ENCODE measurements at regions of chr12 and their contacts with region 1.

Region 1: DNA sequence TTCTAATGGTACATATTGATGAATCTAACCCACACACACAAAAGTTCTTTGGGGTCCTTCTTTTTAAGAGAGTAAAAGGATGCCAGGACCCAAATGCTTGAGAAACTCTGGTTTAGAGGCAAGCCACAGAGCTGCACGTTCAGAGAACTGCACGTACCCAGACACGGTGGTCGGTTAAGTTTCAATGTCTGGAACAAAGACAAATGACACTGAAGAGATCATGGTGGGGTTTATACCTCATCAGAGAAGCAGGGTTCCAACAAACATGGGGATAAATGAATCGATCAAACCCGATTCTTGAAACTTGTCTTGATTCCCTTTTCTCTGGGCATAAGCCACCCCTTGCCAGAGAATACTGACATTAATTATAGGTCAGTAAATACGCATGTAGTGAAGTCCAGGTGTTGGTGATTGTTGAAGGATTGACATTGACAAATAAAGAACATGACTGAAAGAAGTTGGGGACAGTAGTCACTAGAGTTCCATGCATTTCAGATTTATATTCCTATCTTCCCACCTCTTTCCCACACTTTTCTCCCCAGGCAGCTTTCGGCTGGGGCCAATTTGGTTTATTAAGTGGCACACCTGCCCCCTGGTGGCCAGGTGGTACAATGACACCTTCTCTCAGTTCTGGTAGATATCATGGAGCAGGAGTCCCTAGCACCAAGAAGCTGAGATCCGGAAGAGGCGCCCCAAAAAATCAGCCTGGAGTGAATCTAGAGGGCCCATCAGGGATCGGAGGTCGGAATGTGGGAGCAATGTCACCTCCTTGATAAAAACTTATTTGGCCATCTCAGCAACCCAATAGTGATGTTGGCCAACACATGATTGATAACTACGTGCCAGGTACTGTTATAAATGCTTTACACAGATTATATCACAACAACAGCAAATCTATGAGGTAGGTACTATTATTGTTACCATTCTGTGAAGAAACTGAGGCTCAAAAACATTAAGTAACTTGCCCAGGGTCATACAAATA is 17.8 kb upstream of the HDAC7 start:
- DNase-seq: peak; percentile 52 to 80 (median 65)
- ATAC-seq: peak; percentile 68
- H3K4me3 ChIP-seq: no peak overlapping the region
- H3K4me3 Mint-ChIP-seq: no peak overlapping the region
- H3K27ac ChIP-seq: no peak overlapping the region
- H3K27ac Mint-ChIP-seq: peak overlapping the region in 8 of 9 donors; percentile 35 to 97 (median 76)
- H3K4me1 ChIP-seq: peaks cover 19 to 52% of the 10 kb centered on the region in 2 donors
- H3K4me1 Mint-ChIP-seq: peaks cover 38 to 71% (median 55%) of the 10 kb centered on the region in 7 donors
- H3K27me3 ChIP-seq: no peaks in the 10 kb centered on the region
- H3K27me3 Mint-ChIP-seq: no peaks in the 10 kb centered on the region

Region 2: DNA sequence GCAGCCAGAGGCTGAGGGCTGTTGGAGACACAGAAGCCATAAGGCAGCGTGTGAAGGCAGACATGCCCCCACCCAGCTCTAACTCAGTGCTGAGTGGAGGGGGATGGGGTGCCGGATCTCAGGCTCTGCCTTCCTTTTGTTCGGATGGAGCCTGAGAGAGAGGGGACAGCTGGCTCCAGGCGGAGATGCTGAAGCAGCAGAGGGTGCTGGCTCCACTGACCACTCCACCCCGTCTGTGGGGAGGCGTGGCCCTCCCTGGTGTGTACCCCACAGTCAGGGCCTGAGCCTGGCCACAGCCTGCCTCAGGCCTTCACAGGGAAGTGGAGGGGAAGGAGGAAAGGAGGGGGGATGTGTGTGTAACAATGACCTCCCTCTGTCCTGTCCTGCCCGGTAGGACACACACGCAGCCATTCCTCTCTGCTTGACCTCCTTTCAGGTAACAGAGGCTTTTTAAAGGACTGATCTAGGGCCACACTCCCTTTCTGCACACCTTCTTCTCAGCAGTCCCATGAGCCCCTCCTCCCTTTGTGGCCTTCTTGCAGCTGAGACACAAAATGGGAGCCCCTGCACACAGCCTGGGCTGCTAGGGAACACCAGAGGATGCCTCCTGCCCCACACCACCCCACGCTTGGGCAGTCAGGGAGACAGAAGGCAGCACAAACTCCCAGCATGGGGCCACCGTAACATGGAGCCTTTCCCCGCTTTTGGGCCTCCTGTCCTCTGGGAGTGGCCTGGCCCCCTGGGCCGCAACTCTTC is 102.6 kb before region 1 on chr12:
- CTCF ChIA-PET with region 1: interaction called, 330 read pairs
- POLR2A ChIA-PET with region 1: interaction called, 4 read pairs
- intact Hi-C with region 1: no loop called
- DNase-seq: no peak
- ATAC-seq: no peak
- H3K4me3 ChIP-seq: no peak overlapping the region
- H3K4me3 Mint-ChIP-seq: no peak overlapping the region
- H3K27ac ChIP-seq: no peak overlapping the region
- H3K27ac Mint-ChIP-seq: no peak overlapping the region
- H3K4me1 ChIP-seq: no peaks in the 10 kb centered on the region
- H3K4me1 Mint-ChIP-seq: peaks cover 0 to 14% (median 5%) of the 10 kb centered on the region in 7 donors
- H3K27me3 ChIP-seq: no peaks in the 10 kb centered on the region
- H3K27me3 Mint-ChIP-seq: no peaks in the 10 kb centered on the region

Region 3: GRCh38 chr12:47773062-47773857 is 64.2 kb before region 1 on chr12 and contains the start of gene SLC48A1:
- CTCF ChIA-PET with region 1: interaction called, 167 read pairs
- POLR2A ChIA-PET with region 1: interaction called, 19 read pairs
- intact Hi-C with region 1: loop called in 1 of 2 experiments (anchors 1 kb)
- DNase-seq: peak; percentile 63 to 84 (median 80)
- ATAC-seq: peak; percentile 96
- H3K4me3 ChIP-seq: peak within 1 kb of the TSS; percentile 59
- H3K4me3 Mint-ChIP-seq: peak within 1 kb of the TSS in 9 of 10 donors; percentile 83 to 94 (median 91)
- H3K27ac ChIP-seq: peak within 1 kb of the TSS; percentile 74
- H3K27ac Mint-ChIP-seq: peak within 1 kb of the TSS; percentile 75 to 94 (median 80)
- H3K4me1 ChIP-seq: peaks cover 7 to 8% of the 10 kb centered on the region in 2 donors
- H3K4me1 Mint-ChIP-seq: peaks cover 7 to 47% (median 25%) of the 10 kb centered on the region in 7 donors
- H3K27me3 ChIP-seq: no peaks in the 10 kb centered on the region
- H3K27me3 Mint-ChIP-seq: peaks cover 0 to 8% (median 0%) of the 10 kb centered on the region in 5 donors
- total RNA-seq, gene SLC48A1: 6.7 to 14.3 (median 10.0) TPM

Region 4: DNA sequence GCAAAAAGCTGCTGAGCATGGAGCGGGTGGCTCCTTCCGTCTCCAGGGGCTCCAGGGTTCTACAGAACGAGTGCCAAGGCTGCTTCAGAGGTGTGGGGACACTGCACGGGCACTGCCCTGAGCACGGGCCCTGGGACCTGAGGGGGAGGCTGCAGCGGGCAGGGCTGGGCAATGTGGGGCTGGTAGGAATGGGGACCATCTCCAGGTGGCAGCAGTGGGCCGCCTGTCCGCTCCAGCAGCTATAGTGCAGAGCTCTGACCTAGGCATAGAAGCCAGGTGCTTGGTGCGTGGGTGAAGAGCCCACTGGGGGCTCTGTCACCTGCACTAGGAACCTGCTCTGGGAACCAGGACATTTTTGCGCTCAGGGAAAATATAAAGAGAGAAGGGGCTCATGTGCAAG is 40.0 kb before region 1 on chr12:
- CTCF ChIA-PET with region 1: interaction called, 539 read pairs
- POLR2A ChIA-PET with region 1: interaction called, 364 read pairs
- intact Hi-C with region 1: loop called (anchors 1 kb)
- DNase-seq: peak in 6 of 9 donors; percentile 36 to 54 (median 46)
- ATAC-seq: peak; percentile 74
- H3K4me3 ChIP-seq: no peak overlapping the region
- H3K4me3 Mint-ChIP-seq: peak overlapping the region in 3 of 10 donors; percentile 53 to 64 (median 61)
- H3K27ac ChIP-seq: peak overlapping the region; percentile 51
- H3K27ac Mint-ChIP-seq: peak overlapping the region; percentile 57 to 93 (median 87)
- H3K4me1 ChIP-seq: peaks cover 6 to 35% of the 10 kb centered on the region in 2 donors
- H3K4me1 Mint-ChIP-seq: peaks cover 20 to 47% (median 42%) of the 10 kb centered on the region in 7 donors
- H3K27me3 ChIP-seq: no peaks in the 10 kb centered on the region
- H3K27me3 Mint-ChIP-seq: no peaks in the 10 kb centered on the region

Region 5: GRCh38 chr12:47904713-47905310 is 67.3 kb after region 1 on chr12 and contains the start of gene VDR:
- CTCF ChIA-PET with region 1: interaction called, 5 read pairs
- POLR2A ChIA-PET with region 1: no interaction called
- intact Hi-C with region 1: loop called in 1 of 2 experiments (anchors 1 kb)
- DNase-seq: peak; percentile 42 to 76 (median 64)
- ATAC-seq: peak; percentile 86
- H3K4me3 ChIP-seq: peak within 1 kb of the TSS; percentile 73
- H3K4me3 Mint-ChIP-seq: peak within 1 kb of the TSS; percentile 86 to 98 (median 94)
- H3K27ac ChIP-seq: peak within 1 kb of the TSS; percentile 44
- H3K27ac Mint-ChIP-seq: peak within 1 kb of the TSS; percentile 51 to 88 (median 74)
- H3K4me1 ChIP-seq: peaks cover 25 to 41% of the 10 kb centered on the region in 2 donors
- H3K4me1 Mint-ChIP-seq: peaks cover 35 to 57% (median 47%) of the 10 kb centered on the region in 7 donors
- H3K27me3 ChIP-seq: no peaks in the 10 kb centered on the region
- H3K27me3 Mint-ChIP-seq: peaks cover 0 to 34% (median 0%) of the 10 kb centered on the region in 5 donors
- total RNA-seq, gene VDR: 1.6 to 82.6 (median 2.9) TPM

Region 6: DNA sequence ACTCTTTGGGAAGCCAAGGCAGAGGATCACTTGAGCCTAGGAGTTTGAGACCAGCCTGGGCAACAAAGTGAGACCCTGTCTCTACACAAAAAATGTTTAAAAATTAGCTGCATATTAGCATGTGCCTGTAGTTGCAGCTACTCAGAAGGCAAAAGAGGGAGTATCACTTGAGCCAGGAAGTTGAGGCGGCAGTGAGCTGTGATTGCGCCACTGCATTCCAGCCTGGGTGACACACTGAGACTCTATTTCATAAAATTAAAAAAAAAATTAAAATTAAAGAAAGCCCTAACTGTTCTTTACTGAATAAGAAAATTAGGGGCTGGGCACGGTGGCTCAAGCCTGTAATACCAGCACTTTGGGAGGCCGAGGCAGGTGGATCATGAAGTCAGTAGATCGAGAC is 241.4 kb after region 1 on chr12:
- CTCF ChIA-PET with region 1: no interaction called
- POLR2A ChIA-PET with region 1: no interaction called
- intact Hi-C with region 1: no loop called
- DNase-seq: no peak
- ATAC-seq: no peak
- H3K4me3 ChIP-seq: no peak overlapping the region
- H3K4me3 Mint-ChIP-seq: no peak overlapping the region
- H3K27ac ChIP-seq: no peak overlapping the region
- H3K27ac Mint-ChIP-seq: no peak overlapping the region
- H3K4me1 ChIP-seq: no peaks in the 10 kb centered on the region
- H3K4me1 Mint-ChIP-seq: peaks cover 0 to 5% (median 0%) of the 10 kb centered on the region in 7 donors
- H3K27me3 ChIP-seq: no peaks in the 10 kb centered on the region
- H3K27me3 Mint-ChIP-seq: no peaks in the 10 kb centered on the region